K562 (cell line): ENCODE measurements at regions of chr1 and their contacts with region 1.

Region 1: DNA sequence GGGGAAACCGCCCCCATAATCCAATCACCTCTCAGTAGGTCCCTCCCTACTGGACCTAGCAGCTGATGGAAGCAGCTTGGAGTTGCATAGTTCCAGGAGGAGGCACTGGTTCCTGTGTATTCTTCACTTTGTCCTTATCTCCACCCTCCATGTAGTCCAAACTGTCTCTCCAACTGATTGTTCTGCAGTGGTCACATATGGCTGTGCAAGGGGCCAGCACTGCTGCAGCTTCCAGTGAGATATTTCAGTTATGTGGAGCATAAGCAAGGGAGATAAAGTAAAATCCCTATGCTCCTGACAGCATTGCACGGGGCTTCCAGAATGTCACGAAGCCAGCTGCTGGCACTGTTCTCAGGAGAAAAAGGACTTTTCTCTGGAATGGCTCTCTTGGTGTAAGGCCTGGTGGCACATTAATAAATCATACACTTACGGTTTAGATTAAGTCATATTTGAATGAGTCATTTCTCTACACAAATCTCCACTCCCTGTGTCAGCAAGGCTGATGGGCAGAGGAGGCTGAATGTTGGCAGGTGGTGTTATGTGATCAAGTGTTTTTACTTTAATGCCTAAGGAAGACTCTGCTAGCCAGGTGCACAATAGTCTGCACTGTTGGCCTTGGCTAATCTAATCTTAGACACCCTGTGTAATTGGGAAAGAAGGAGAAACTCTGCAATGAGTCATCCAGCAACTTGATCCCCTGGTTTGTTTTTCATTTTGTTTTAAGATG is 93.4 kb downstream of the KCNK1 start:
- DNase-seq: peak; percentile 37 to 89 (median 65)
- ATAC-seq: peak; percentile 93
- H3K4me3 ChIP-seq: no peak overlapping the region
- H3K27ac ChIP-seq: peak overlapping the region; percentile 73
- H3K4me1 ChIP-seq: peaks cover 7 to 45% of the 10 kb centered on the region in 2 experiments; a peak in 4 of 5 replicates
- H3K27me3 ChIP-seq: no peaks in the 10 kb centered on the region
- CTCF ChIP-seq: peak; percentile 43 to 53 (median 51); a peak in 4 of 6 replicates
- EP300 ChIP-seq: peak; percentile 85
- POLR2A ChIP-seq: no peak
- RAD21 ChIP-seq: peak; percentile 10 to 43; a peak in 2 of 4 replicates

Region 2: DNA sequence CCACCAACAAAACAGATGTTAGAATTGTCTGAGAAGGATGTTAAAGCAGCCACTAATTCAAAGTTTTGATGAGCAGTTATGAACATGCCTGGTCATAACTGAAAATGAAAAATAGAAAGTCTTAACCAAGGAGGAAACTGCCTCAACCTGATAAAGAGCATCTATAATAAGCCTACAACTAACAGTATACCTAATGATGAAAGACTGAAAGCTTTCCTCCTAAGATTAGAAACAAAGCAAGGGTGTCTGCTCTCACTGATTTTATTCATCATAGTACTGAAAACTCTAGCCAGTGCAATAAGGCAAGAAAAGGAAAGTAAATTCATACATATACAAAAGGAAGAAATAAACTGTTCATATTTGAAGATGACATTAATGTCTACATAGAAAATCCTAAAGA is 11.4 kb before region 1 on chr1:
- CTCF ChIA-PET with region 1: no interaction called
- POLR2A ChIA-PET with region 1: no interaction called
- in situ Hi-C with region 1: no loop called
- intact Hi-C with region 1: no loop called
- DNase-seq: no peak
- ATAC-seq: no peak
- H3K4me3 ChIP-seq: no peak overlapping the region
- H3K27ac ChIP-seq: no peak overlapping the region
- H3K4me1 ChIP-seq: no peaks in the 10 kb centered on the region; a peak in 1 of 5 replicates
- H3K27me3 ChIP-seq: no peaks in the 10 kb centered on the region
- CTCF ChIP-seq: no peak
- EP300 ChIP-seq: no peak
- POLR2A ChIP-seq: no peak
- RAD21 ChIP-seq: no peak

Region 3: GRCh38 chr1:233904633-233905415 is 197.5 kb after region 1 on chr1 and contains the start of gene SLC35F3:
- CTCF ChIA-PET with region 1: no interaction called
- POLR2A ChIA-PET with region 1: no interaction called
- in situ Hi-C with region 1: no loop called
- intact Hi-C with region 1: loop called (anchors 10 kb)
- DNase-seq: peak; percentile 58 to 81 (median 72)
- ATAC-seq: peak; percentile 100
- H3K4me3 ChIP-seq: peak within 1 kb of the TSS; percentile 23
- H3K27ac ChIP-seq: no peak within 1 kb of the TSS
- H3K4me1 ChIP-seq: peaks cover 0 to 16% of the 10 kb centered on the region in 2 experiments; a peak in 2 of 5 replicates
- H3K27me3 ChIP-seq: peaks cover 16 to 25% of the 10 kb centered on the region in 2 experiments
- CTCF ChIP-seq: peak; percentile 31 to 72 (median 52); a peak in 3 of 6 replicates
- EP300 ChIP-seq: no peak
- POLR2A ChIP-seq: no peak
- RAD21 ChIP-seq: peak; percentile 23 to 65; a peak in 1 of 4 replicates
- polyA plus RNA-seq, gene SLC35F3: not detected